Gastrocnemius medialis (tissue), 4 donors: ENCODE measurements at regions of chr12 and their contacts with region 1.

Region 1: DNA sequence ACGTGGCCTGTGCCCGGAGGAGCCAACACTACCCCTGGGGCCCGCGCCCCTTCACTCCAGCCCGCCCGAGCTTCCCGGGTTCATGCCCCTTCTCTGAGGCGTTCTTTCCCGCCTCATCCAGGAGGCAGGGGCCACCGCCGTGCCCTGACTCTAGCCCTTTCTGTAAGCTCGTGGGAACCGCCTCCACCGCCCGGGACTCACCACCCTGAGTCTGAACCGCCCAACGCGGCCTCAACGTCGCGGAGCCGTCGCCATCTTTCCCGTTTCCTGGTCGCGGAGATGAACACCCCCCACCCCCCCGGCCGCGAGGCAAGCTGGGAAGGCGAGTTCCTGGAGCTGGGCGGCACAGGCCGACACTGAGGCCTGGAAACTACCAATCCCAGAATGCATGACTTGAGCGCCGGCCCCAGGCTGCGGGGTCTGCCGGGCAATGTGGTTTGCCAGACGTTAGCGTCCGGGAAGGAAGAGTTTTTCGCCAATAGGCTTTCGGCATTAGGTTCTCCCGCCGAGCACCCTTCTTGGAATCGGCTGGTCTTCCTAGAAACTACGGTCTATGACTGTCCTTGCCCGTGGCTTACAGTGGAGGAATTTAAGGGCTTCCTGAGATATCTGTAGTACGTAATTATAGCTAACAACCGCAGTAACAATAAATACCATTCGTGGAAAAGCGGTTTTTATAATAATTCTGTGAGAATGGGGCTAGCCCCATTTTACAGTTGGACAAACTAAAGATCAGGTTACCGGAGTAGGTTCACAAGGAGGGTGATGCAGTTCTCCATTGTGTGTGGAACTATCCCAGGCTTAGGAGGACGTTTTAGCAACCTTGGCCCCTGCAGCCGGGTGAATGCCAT is at the start of gene DDX23:
- DNase-seq: peak; percentile 93 to 94
- ATAC-seq: peak; percentile 95 to 96
- H3K4me3 ChIP-seq: peak within 1 kb of the TSS; percentile 77 to 100 (median 86)
- H3K27ac ChIP-seq: peak within 1 kb of the TSS; percentile 72 to 89 (median 87)
- H3K4me1 ChIP-seq: peaks cover 17 to 22% of the 10 kb centered on the region in 2 donors
- H3K27me3 ChIP-seq: no peaks in the 10 kb centered on the region
- CTCF ChIP-seq: no peak
- POLR2A ChIP-seq: peak; percentile 22 to 55
- total RNA-seq, gene DDX23: 55.8 to 80.6 (median 75.7) TPM

Region 2: DNA sequence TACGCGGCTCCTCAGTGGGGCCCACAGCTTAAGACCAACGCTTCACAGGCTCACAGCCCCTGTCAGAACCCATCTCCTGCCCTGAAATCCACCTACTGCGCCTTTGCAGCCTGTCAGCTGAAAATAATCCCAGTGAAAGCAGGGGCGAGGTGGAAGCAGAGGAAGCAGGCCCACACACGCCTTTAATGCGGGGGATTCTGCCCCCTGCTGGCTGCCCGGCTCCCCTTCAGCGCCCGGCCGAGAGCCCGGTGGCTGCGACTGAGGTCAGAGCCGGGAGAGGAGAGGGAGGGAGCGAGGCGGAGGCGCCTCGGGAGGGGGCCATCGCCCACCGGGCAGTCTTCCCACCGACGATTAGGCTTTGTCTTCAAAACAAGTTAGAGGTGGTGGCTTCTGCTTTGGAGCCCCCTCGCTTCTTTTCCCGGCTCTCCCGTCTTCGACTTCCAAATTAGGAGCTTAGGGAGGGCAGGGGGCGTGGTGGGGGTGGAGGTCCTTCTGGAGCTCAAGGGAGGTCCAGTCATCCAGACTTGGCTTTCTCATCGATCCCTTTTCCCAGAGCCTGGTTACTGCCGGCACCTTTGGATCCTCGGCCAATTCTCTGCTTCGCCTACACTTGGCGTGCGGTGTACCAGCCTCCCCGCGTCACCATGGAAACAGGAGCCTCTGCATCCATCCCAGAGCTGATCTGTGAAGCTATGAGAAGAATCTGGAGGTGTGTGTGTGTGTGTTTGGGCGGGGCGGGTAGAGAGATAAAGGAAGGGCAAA is 38.7 kb after region 1 on chr12:
- in situ Hi-C with region 1: loop called in 2 of 4 experiments (anchors 5 kb)
- intact Hi-C with region 1: loop called (anchors 1 kb)
- DNase-seq: peak; percentile 28 to 53
- ATAC-seq: peak; percentile 79 to 89
- H3K4me3 ChIP-seq: peak overlapping the region in 3 of 4 donors; percentile 25 to 42 (median 34)
- H3K27ac ChIP-seq: no peak overlapping the region
- H3K4me1 ChIP-seq: no peaks in the 10 kb centered on the region
- H3K27me3 ChIP-seq: peaks cover 7 to 10% (median 7%) of the 10 kb centered on the region in 3 donors
- CTCF ChIP-seq: peak; percentile 70 to 90 (median 86)
- POLR2A ChIP-seq: no peak

Region 3: GRCh38 chr12:48936379-48936979 is 84.4 kb after region 1 on chr12:
- in situ Hi-C with region 1: loop called in 2 of 4 experiments (anchors 5 to 10 kb)
- intact Hi-C with region 1: loop called (anchors 1 kb)
- DNase-seq: peak in 1 of 2 donors; percentile 48
- ATAC-seq: peak in 1 of 2 donors; percentile 64
- H3K4me3 ChIP-seq: no peak overlapping the region
- H3K27ac ChIP-seq: no peak overlapping the region
- H3K4me1 ChIP-seq: no peaks in the 10 kb centered on the region
- H3K27me3 ChIP-seq: no peaks in the 10 kb centered on the region
- CTCF ChIP-seq: peak; percentile 63 to 88 (median 76)
- POLR2A ChIP-seq: no peak